ENCODE measurements at regions of chr5 and their contacts with region 1.

Region 1: GRCh38 chr5:160439205-160439600 is 17.5 kb downstream of the PTTG1 start:
- DNase-seq: peak; percentile 89
- H3K4me3 Mint-ChIP-seq: peak overlapping the region; percentile 81
- H3K27ac Mint-ChIP-seq: peak overlapping the region; percentile 83
- H3K4me1 Mint-ChIP-seq: peaks cover 36% of the 10 kb centered on the region
- H3K27me3 Mint-ChIP-seq: peaks cover 10% of the 10 kb centered on the region

Region 2: DNA sequence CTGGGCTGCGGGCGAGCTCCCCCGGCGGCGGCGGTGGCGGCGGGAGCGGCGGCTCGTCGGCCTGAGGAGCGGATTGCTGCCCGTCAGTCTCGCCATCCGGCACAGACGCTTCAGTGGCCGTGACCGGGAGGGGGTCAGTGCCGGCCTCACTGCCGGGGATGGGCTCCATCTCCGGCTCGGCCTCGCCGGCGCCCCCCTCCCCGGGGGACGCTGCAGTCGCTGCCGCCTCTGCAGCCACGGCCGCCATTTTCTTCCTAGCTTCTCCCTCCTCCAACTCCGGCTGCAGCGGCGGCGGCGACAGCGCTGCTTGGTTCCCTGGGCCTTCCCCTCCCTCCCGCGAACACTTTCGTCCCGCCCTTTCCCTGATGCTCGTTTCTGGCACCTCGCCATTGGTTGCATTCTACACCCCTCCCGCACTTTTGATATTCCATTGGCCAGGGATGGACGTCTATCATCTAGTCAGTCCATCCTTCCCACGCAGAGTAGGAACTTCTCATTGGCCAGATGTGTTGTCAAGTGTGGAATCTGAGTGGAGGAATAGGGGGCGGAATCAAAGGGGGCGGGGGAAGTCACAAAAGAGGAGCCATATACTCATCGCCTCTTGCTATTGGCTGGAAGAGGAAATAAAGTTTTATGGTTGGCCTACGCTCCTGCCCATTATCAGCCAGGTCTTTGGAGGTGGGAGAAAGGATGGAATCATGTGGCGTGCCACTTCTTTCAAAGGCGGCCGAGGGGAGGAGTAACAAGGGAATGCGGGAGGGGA is 319.9 kb before region 1 on chr5 and contains the start of gene PWWP2A:
- CTCF ChIA-PET with region 1: no interaction called
- POLR2A ChIA-PET with region 1: no interaction called
- DNase-seq: peak; percentile 98
- H3K4me3 Mint-ChIP-seq: peak within 1 kb of the TSS; percentile 89
- H3K27ac Mint-ChIP-seq: peak within 1 kb of the TSS; percentile 86
- H3K4me1 Mint-ChIP-seq: peaks cover 22% of the 10 kb centered on the region
- H3K27me3 Mint-ChIP-seq: peaks cover 8% of the 10 kb centered on the region
- total RNA-seq, gene PWWP2A: 21.9 to 24.6 TPM

Region 3: DNA sequence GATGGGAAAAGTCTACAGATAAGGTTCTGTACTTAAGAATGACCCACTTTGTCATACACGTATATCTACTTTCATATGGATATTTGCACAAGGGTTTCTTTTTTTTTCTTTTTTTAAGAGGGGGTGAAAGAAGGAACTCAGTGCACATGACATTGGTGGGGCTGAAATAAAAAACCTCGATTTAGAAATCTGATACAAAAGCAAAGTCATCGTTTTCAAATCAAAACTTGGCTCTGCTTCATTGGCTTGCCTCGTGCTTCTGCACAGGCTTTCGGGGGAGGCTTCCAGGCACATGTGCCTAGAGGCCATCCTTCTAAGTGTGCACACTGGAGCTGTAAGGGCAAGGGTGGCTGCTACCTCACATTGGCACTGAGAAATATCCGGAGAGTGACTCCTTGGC is 13.6 kb after region 1 on chr5:
- CTCF ChIA-PET with region 1: interaction called, 85 read pairs
- POLR2A ChIA-PET with region 1: no interaction called
- DNase-seq: no peak
- H3K4me3 Mint-ChIP-seq: no peak overlapping the region
- H3K27ac Mint-ChIP-seq: no peak overlapping the region
- H3K4me1 Mint-ChIP-seq: peaks cover 34% of the 10 kb centered on the region
- H3K27me3 Mint-ChIP-seq: peaks cover 1% of the 10 kb centered on the region

Region 4: GRCh38 chr5:160467555-160468362 is 28.6 kb after region 1 on chr5:
- CTCF ChIA-PET with region 1: interaction called, 185 read pairs
- POLR2A ChIA-PET with region 1: interaction called, 73 read pairs
- DNase-seq: peak; percentile 89
- H3K4me3 Mint-ChIP-seq: peak overlapping the region; percentile 99
- H3K27ac Mint-ChIP-seq: peak overlapping the region; percentile 99
- H3K4me1 Mint-ChIP-seq: peaks cover 71% of the 10 kb centered on the region
- H3K27me3 Mint-ChIP-seq: no peaks in the 10 kb centered on the region

Region 5: DNA sequence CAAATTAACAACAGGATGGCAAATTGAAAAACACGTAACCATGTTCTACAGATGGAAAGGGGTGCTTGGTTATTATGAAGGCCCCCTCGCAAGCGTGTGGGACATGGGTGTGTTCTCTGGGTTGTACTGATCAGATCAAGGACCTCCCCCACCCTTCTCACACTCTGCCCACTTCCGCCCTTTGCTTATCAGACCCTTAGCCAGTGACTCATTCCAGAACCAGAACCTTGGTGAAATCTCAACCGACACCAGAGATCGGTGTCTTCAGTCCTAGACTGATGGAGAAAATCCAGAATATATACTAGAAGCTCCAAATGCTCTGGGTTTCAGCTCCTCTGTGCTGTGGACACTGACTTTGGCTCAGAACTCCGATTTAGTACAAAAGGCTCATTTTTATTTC is 47.4 kb after region 1 on chr5:
- CTCF ChIA-PET with region 1: interaction called, 22 read pairs
- POLR2A ChIA-PET with region 1: interaction called, 3 read pairs
- DNase-seq: peak; percentile 80
- H3K4me3 Mint-ChIP-seq: peak overlapping the region; percentile 25
- H3K27ac Mint-ChIP-seq: peak overlapping the region; percentile 83
- H3K4me1 Mint-ChIP-seq: peaks cover 69% of the 10 kb centered on the region
- H3K27me3 Mint-ChIP-seq: no peaks in the 10 kb centered on the region

Region 6: GRCh38 chr5:160500786-160501779 is 61.9 kb after region 1 on chr5:
- CTCF ChIA-PET with region 1: interaction called, 157 read pairs
- POLR2A ChIA-PET with region 1: interaction called, 40 read pairs
- DNase-seq: no peak
- H3K4me3 Mint-ChIP-seq: no peak overlapping the region
- H3K27ac Mint-ChIP-seq: no peak overlapping the region
- H3K4me1 Mint-ChIP-seq: peaks cover 24% of the 10 kb centered on the region
- H3K27me3 Mint-ChIP-seq: peaks cover 7% of the 10 kb centered on the region

Region 7: GRCh38 chr5:160787240-160787639 is 348.0 kb after region 1 on chr5:
- CTCF ChIA-PET with region 1: interaction called, 10 read pairs
- POLR2A ChIA-PET with region 1: no interaction called
- DNase-seq: peak; percentile 21
- H3K4me3 Mint-ChIP-seq: no peak overlapping the region
- H3K27ac Mint-ChIP-seq: no peak overlapping the region
- H3K4me1 Mint-ChIP-seq: no peaks in the 10 kb centered on the region
- H3K27me3 Mint-ChIP-seq: peaks cover 6% of the 10 kb centered on the region